Activated CD4-positive, alpha-beta T cell treated with anti-CD3 and anti-CD28 coated beads for 36 hours (primary cell): ENCODE measurements at regions of chr15 and their contacts with region 1.

Region 1: GRCh38 chr15:72473614-72474465 is at the start of gene ARIH1:
- DNase-seq: peak; percentile 97
- ATAC-seq: peak; percentile 78
- H3K4me3 Mint-ChIP-seq: peak within 1 kb of the TSS; percentile 92
- H3K27ac Mint-ChIP-seq: peak within 1 kb of the TSS; percentile 92
- H3K4me1 Mint-ChIP-seq: peaks cover 36% of the 10 kb centered on the region
- H3K27me3 Mint-ChIP-seq: no peaks in the 10 kb centered on the region
- total RNA-seq, gene ARIH1: 177 to 195 TPM

Region 2: DNA sequence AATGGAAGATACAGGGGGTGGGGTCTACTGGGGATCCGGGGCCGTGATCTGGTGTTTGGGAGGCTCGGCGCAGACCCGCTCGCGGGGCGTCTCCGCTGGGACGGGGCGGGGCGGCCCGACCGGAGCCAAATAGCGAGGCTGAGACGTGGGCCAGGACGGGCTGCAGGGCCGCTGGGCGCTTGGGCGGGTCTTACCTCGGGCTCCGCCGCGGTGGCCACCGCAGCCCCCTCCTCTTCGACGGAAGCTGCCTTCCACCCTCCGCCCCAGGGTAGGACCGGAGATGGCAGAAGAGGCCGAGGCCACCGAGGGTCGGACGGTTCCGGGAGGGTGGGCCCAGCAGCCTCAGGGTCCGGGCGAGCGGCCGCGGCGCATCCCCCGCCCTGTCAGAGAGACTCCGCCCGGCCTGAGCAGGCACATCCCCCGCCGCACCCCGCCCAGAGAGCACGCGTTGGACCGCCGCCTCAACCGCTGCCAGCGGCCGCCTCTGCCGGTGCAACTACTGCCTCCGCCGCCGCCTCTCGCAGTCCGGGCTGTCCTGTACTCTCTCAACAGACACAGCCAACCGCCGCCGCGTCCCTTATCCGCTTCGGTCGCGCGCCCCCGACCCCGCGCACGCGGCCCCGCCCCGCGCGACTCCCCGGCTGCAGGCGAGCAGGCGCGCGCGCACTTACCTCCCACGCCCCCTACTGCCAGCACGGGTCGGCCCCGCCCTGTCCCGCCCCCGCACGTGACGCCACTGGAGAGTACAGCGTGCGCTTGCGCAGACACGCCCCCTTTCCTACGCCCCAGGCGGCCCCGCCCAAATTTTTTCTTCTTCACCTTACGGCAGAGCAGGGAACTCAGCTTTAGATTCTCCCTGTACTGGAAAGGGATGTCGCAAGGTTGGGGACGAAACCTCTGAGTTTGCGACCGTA is 356.1 kb before region 1 on chr15 and contains the start of gene MYO9A:
- CTCF ChIA-PET with region 1: no interaction called
- POLR2A ChIA-PET with region 1: no interaction called
- intact Hi-C with region 1: loop called (anchors 1 to 2 kb)
- DNase-seq: peak; percentile 100
- ATAC-seq: peak; percentile 73
- H3K4me3 Mint-ChIP-seq: peak within 1 kb of the TSS; percentile 98
- H3K27ac Mint-ChIP-seq: peak within 1 kb of the TSS; percentile 96
- H3K4me1 Mint-ChIP-seq: peaks cover 40% of the 10 kb centered on the region
- H3K27me3 Mint-ChIP-seq: no peaks in the 10 kb centered on the region
- total RNA-seq, gene MYO9A: 19.0 to 20.3 TPM

Region 3: DNA sequence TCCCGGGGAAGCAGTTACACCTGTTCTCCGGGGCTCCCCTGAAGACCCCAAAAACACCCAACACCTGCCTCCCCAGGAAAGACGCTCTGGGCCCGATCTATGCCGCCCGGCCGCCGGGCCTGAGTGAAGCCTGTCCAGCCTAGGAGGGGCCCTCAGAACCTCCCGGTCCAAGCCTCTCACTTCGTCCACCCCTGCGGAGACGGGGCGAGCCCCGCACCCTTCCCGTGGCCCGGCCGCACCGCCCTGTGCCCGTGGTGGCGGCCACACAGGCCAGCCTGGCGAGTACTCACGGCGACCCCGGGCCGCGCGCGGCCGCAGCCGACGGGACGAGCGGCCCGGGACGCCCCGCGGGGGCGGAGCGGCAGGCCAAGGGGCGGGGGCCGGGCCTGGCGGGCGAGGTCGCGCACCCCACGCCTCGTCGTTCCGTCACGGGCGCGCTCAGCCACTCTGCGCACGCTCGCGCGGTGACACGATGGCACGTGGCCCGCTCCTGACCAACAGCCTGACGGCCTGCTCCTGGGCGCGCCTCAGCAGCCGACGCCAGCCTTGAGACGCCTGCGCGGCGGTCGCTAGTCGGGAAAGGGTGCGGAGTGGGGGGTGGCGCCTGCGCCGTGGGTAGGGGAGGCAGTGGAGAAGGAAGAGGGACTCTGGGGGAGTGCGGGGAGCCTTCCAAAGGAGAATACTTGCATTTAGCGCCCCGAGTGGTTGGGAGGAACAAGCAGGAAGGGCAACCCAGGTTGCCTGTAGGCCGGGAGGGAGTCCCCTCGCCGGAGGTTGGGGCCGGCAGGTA is 201.4 kb before region 1 on chr15 and contains the start of gene PARP6:
- CTCF ChIA-PET with region 1: no interaction called
- POLR2A ChIA-PET with region 1: no interaction called
- intact Hi-C with region 1: loop called (anchors 1 to 5 kb)
- DNase-seq: peak; percentile 99
- ATAC-seq: peak; percentile 98
- H3K4me3 Mint-ChIP-seq: peak within 1 kb of the TSS; percentile 80
- H3K27ac Mint-ChIP-seq: peak within 1 kb of the TSS; percentile 92
- H3K4me1 Mint-ChIP-seq: peaks cover 35% of the 10 kb centered on the region
- H3K27me3 Mint-ChIP-seq: no peaks in the 10 kb centered on the region
- total RNA-seq, gene PARP6: 41.4 to 58.2 TPM

Region 4: DNA sequence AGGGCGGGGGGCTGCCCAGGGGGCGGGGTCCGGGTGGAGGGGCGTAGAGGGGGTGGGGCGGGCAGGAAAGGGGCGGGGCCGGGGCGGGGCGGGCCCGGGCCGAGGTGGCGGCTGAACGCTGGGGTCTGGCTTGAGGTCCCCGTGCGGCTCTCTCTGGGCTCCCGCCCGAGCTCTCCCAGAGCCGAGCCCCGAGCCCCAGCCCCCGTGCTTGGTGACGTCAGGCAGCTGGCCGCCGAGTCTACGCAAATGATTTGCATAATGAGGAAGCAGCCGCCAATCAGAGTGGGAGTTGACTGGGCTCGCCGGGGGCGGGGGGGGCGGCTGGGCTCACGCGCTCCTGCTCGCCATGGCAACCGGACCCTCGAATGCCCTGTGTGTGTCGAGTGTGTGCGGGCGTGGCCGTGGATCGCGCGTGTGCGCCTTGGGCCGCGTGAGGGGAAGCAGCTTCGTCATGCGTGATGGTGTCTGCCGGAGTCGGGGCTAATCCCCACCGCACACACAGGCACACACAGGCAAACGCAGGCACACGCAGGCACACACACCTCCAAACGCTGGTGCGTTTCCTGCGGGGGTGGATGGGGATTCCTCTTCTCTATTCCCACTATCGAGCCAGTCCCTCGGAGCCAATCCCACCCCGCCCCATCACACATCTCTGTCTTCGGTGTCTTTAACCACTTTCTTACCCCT is 153.7 kb before region 1 on chr15 and contains the start of gene CELF6:
- CTCF ChIA-PET with region 1: no interaction called
- POLR2A ChIA-PET with region 1: no interaction called
- intact Hi-C with region 1: loop called in 1 of 2 experiments (anchors 5 kb)
- DNase-seq: peak; percentile 84
- ATAC-seq: peak; percentile 78
- H3K4me3 Mint-ChIP-seq: peak within 1 kb of the TSS; percentile 71
- H3K27ac Mint-ChIP-seq: peak within 1 kb of the TSS; percentile 21
- H3K4me1 Mint-ChIP-seq: peaks cover 15% of the 10 kb centered on the region
- H3K27me3 Mint-ChIP-seq: peaks cover 8% of the 10 kb centered on the region
- total RNA-seq, gene CELF6: 0.37 to 0.40 TPM

Region 5: DNA sequence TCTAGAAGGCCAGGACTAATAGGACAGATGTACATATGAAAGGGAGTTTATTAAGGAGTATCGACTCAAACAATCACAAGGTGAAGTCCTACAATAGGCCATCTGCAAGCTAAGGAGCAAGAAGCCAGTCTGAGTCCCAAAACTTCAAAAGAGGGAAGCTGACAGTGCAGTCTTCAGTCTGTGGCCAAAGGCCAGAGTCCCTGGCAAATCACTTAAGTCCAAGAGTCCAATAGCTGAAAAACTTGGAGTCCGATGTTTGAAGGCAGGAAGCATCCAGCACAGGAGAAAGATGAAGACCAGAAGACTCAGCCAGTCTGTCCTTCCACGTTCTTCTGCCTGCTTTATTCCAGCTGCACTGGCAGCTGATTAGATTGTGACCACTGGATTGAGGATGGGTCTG is 142.8 kb before region 1 on chr15:
- CTCF ChIA-PET with region 1: no interaction called
- POLR2A ChIA-PET with region 1: no interaction called
- intact Hi-C with region 1: no loop called
- DNase-seq: no peak
- ATAC-seq: no peak
- H3K4me3 Mint-ChIP-seq: no peak overlapping the region
- H3K27ac Mint-ChIP-seq: no peak overlapping the region
- H3K4me1 Mint-ChIP-seq: no peaks in the 10 kb centered on the region
- H3K27me3 Mint-ChIP-seq: no peaks in the 10 kb centered on the region

Region 6: GRCh38 chr15:72532991-72533601 is 59.3 kb after region 1 on chr15:
- CTCF ChIA-PET with region 1: interaction called, 3 read pairs
- POLR2A ChIA-PET with region 1: no interaction called
- intact Hi-C with region 1: loop called in 1 of 2 experiments (anchors 5 kb)
- DNase-seq: peak; percentile 56
- ATAC-seq: peak; percentile 58
- H3K4me3 Mint-ChIP-seq: no peak overlapping the region
- H3K27ac Mint-ChIP-seq: no peak overlapping the region
- H3K4me1 Mint-ChIP-seq: peaks cover 44% of the 10 kb centered on the region
- H3K27me3 Mint-ChIP-seq: no peaks in the 10 kb centered on the region